Colonic mucosa (tissue), 4 donors: ENCODE measurements at regions of chr14 and their contacts with region 1.

Region 1: DNA sequence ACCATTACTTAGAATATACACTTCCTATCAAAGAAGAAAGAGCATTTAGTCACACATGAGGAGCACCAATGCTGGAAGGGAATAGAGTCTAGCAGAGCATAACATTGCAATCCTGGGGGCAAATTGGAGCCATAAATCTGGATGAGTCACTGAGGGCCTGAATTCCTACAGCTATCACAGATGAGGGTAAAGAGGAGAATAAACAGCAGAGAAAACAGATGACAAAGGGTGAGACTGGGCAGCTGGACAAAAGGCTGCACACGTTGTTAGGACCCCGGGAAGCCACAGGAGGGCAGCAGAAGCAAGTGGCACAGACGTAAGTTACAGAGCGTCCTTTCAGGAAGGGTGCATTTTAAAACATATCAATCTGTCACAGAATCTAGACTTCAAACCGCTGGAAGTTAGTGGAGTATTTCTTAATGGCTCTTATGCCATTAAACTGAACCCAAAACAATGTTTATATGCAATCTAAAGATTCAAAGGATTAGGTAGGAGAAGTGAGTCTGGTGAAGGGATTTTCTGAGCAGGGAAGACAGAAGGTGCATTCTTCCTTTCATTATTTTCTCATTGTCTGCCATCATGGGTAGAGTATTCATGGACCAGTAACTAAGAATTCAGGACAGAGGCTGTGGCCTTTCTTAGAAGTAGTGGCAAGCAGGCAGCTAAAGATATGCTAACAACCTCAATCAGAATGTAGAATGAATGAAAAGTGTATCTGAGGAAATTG is 159.8 kb upstream of the DAAM1 start:
- DNase-seq: peak; percentile 66
- H3K4me3 ChIP-seq: no peak overlapping the region
- H3K27ac ChIP-seq: no peak overlapping the region
- H3K4me1 ChIP-seq: no peaks in the 10 kb centered on the region
- H3K27me3 ChIP-seq: no peaks in the 10 kb centered on the region
- CTCF ChIP-seq: peak; percentile 70

Region 2: DNA sequence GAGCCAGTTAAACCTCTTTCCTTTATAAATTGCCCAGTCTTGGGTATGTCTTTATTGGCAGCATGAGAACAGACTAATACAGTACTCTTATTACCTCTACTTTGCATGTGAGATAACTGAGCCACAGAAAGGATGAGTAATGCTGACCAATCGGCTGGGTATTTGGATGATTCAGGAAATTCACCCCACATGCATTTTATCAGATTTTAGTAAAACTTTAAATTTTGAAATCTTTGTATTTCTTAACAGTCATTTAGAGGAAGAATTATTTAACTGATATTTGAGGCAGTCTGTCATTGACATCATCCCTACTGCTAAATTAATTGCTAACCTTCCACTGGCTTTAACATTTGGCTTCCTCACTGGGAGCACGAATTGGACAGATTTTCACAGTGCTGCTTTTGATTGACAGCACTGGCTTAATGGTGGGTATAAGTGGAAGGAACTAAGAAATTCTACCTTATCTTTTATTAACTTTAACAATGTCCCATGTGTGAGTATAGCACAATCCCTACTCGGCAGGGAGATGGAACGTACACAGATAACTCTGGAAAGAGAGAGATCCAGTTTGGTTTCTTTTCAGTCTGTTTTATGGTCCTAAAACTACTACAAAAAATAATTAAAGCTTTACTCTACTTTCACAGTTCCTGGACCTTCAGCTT is 129.9 kb before region 1 on chr14:
- intact Hi-C with region 1: no loop called
- DNase-seq: no peak
- H3K4me3 ChIP-seq: no peak overlapping the region
- H3K27ac ChIP-seq: no peak overlapping the region
- H3K4me1 ChIP-seq: no peaks in the 10 kb centered on the region
- H3K27me3 ChIP-seq: no peaks in the 10 kb centered on the region
- CTCF ChIP-seq: no peak

Region 3: DNA sequence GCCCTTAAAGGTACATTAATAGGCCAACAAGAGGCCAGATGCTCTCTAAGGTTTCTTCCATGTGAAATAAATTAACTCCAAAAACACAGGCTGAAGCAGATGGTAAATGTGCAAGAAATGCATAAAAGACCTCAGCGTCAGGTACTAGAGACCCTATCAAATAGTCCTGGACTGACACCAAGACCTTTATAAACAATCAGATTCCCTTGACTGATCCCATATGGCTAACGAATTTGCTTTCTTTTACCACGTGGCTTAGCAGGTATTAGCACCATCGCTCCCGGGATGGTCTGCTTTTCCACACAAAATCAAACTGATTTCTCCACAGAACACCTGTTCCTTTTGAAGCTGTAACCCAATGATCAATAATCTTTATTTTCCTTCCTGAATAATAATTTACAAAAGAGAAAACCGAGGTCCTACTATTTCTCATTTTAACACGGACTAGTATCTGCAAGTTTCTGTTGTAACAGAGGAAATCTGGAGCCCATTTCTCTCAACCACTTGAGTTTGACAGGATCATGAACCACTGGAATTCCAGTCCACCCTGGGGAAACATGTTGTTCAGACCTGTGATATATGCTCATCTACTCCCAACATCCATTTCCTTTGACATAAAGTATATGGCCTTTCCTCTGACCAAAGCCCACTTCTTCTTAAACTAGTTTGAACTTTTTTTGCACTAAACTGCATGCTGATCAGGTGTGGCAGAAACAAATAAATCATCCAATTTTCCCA is 111.6 kb after region 1 on chr14:
- intact Hi-C with region 1: no loop called
- DNase-seq: no peak
- H3K4me3 ChIP-seq: no peak overlapping the region
- H3K27ac ChIP-seq: no peak overlapping the region
- H3K4me1 ChIP-seq: no peaks in the 10 kb centered on the region
- H3K27me3 ChIP-seq: no peaks in the 10 kb centered on the region
- CTCF ChIP-seq: no peak

Region 4: DNA sequence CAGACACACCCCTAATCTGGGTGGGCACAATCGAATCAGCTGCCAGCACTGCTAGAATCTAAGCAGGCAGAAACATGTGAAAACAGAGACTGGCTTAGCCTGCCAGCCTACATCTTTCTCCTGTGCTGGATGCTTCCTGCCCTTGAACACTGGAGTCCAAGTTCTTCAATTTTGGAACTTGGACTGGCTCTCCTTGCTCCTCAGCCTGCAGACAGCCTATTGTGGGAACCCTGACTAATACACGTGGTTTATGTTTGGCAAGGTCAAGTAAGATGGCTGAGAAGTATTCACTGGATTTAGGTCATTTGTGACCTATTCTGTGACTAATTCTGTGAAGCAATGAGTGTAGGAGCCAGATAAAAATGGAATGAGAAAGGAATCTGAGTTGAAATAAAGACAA is 425.5 kb after region 1 on chr14:
- intact Hi-C with region 1: loop called (anchors 10 kb)
- DNase-seq: no peak
- H3K4me3 ChIP-seq: no peak overlapping the region
- H3K27ac ChIP-seq: no peak overlapping the region
- H3K4me1 ChIP-seq: no peaks in the 10 kb centered on the region
- H3K27me3 ChIP-seq: no peaks in the 10 kb centered on the region
- CTCF ChIP-seq: no peak